Ovary (tissue), 10 donors: ENCODE measurements at regions of chr18 and their contacts with region 1.

Region 1: GRCh38 chr18:75958683-75959082 is 531.2 kb upstream of the SMIM21 start:
- DNase-seq: no peak
- H3K4me3 ChIP-seq: no peak overlapping the region
- H3K27ac ChIP-seq: no peak overlapping the region
- H3K4me1 ChIP-seq: no peaks in the 10 kb centered on the region
- H3K27me3 ChIP-seq: no peaks in the 10 kb centered on the region
- CTCF ChIP-seq: no peak
- EP300 ChIP-seq: no peak
- POLR2A ChIP-seq: no peak

Region 2: DNA sequence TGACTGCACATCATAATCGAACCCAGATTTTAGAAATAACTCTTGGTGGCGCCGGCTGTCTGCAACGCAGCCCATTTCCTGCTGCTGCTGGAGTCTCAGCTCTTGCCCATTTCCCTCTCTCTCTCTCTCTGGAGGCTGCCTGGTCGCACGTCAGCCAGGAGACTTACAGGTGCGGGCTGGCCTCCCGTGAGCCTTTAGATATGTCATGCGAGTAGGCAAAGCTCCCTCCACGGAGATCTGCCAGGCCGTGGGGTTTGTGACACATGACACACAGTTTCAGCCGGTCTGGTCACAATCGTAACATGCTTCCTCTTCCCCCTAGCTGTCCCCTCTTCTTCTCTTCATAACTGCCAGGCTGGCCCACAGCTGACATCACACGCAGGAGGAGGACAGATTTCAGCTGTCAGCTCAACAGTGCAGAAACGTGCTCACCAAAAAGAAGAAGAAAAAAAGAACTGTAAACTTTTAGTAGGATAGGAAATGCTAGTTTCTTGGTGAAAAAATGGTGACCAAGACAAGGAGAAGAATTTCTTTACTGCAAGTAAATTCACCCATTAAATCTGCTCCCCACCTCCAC is 47.0 kb after region 1 on chr18:
- intact Hi-C with region 1: loop called in 1 of 4 experiments (anchors 1 kb)
- DNase-seq: no peak
- H3K4me3 ChIP-seq: no peak overlapping the region
- H3K27ac ChIP-seq: no peak overlapping the region
- H3K4me1 ChIP-seq: no peaks in the 10 kb centered on the region
- H3K27me3 ChIP-seq: no peaks in the 10 kb centered on the region
- CTCF ChIP-seq: no peak
- EP300 ChIP-seq: no peak
- POLR2A ChIP-seq: no peak